A673 (cell line): ENCODE measurements at regions of chr19 and their contacts with region 1.

Region 1: GRCh38 chr19:32858155-32858554 is 11.4 kb downstream of the SLC7A9 start:
- DNase-seq: no peak
- H3K4me3 ChIP-seq: no peak overlapping the region
- H3K27ac ChIP-seq: no peak overlapping the region
- H3K4me1 ChIP-seq: peaks cover 6% of the 10 kb centered on the region
- H3K27me3 ChIP-seq: no peaks in the 10 kb centered on the region
- CTCF ChIP-seq: no peak

Region 2: DNA sequence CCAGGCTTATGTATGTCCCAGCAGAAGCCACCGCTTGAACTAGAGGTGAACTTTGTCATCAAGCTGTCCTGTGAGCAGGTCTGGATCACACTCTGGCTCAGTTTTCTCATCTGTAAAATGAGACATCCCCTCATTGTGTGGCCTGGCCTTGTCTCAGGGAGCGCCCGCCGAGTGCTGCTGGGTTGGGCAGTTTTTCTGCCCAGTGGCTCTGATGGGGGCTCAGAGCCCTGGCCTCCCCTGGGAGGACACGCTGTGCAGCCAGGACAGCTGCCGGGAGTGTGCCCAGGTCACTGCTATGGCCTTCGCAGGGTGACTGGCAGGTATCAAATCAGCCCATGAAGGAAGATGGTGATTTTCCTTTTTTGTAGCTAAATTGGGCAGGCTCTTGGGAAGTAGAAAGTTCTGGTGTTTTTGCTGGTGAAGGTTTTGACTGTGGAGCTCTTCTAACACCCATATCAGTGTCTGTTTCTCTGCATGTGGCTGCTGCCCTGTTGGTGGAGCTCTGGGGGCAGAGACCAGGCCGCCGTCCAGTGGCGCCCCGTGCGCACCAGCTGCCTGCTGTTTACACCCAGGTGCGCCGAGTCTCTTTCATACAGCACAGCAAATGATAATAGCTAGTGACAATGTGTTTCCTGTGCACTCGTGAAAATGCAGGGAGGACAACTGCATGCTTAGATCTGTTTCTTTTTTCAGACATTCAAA is 29.4 kb before region 1 on chr19:
- CTCF ChIA-PET with region 1: interaction called, 4 read pairs
- POLR2A ChIA-PET with region 1: interaction called, 14 read pairs
- intact Hi-C with region 1: no loop called
- DNase-seq: no peak
- H3K4me3 ChIP-seq: no peak overlapping the region
- H3K27ac ChIP-seq: no peak overlapping the region
- H3K4me1 ChIP-seq: no peaks in the 10 kb centered on the region
- H3K27me3 ChIP-seq: no peaks in the 10 kb centered on the region
- CTCF ChIP-seq: no peak

Region 3: DNA sequence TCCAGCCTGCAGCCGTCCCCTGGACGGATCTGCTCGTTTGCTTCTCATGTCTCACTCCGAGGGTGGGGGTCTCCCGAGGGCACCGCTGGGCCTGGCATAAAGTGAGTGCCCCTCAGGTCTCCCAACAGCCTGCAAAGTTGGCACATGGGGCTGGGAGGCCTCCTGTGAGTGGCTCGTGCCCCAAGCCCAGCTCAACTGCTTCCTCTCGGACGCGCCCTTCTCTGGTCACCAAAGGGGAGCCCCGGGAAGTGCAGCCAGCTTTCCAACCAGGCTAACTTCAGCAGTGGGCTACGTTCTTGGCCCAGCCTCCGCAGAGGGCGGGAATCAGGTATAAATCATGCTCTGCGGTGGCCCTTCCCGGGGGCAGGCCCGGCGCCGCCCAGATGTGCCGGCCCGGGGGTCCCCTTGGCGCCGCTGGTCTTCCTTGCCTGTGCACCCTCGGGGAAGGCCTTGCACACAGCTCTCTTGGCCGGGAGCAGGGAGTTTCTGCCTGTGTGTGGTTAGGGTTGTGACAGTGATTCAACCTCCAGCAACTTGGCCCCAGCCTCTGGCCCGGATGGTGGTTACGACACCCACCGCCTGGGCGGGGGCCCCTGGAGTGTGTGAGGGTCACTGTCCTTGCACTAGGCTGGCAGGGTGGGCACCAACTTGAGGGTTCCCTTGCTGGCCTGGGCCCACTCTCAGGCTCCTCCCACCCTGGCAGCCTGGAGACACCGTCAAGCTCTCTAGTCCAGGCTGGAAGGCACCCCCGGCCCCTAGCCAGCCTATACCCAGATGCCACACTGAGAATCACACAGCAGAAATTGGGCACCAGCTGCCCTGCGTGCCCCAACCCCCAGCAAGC is 536.1 kb after region 1 on chr19:
- CTCF ChIA-PET with region 1: no interaction called
- POLR2A ChIA-PET with region 1: no interaction called
- intact Hi-C with region 1: no loop called
- DNase-seq: no peak
- H3K4me3 ChIP-seq: no peak overlapping the region
- H3K27ac ChIP-seq: no peak overlapping the region
- H3K4me1 ChIP-seq: peaks cover 13% of the 10 kb centered on the region
- H3K27me3 ChIP-seq: no peaks in the 10 kb centered on the region
- CTCF ChIP-seq: no peak